ENCODE measurements at regions of chr2 and their contacts with region 1.

Region 1: DNA sequence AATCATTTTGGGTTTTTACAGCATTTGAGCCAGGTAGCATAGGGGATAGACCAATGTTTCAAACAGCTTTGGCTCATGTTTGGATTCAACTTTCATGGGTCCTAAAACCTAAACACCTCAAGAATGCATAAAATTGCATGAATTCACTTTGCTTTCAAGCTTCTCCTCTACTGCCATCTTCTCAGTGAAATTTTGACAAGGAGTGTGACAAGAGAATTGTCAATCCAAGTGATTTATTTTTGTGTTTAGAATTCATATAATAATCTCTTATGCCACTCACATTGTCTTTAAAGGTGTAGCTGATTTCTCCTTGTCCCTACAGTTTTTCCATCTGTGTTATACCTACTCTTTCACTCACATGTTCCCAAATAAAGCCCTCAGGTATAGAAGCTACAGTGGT is 264.8 kb upstream of the RND3 start:
- DNase-seq: no peak
- ATAC-seq: no peak
- H3K4me3 Mint-ChIP-seq: no peak overlapping the region
- H3K27ac Mint-ChIP-seq: no peak overlapping the region
- H3K4me1 Mint-ChIP-seq: no peaks in the 10 kb centered on the region
- H3K27me3 Mint-ChIP-seq: no peaks in the 10 kb centered on the region

Region 2: GRCh38 chr2:150742094-150742493 is 10.1 kb before region 1 on chr2:
- CTCF ChIA-PET with region 1: no interaction called
- POLR2A ChIA-PET with region 1: no interaction called
- intact Hi-C with region 1: loop called in 1 of 2 experiments (anchors 1 kb)
- DNase-seq: no peak
- ATAC-seq: no peak
- H3K4me3 Mint-ChIP-seq: no peak overlapping the region
- H3K27ac Mint-ChIP-seq: no peak overlapping the region
- H3K4me1 Mint-ChIP-seq: no peaks in the 10 kb centered on the region
- H3K27me3 Mint-ChIP-seq: no peaks in the 10 kb centered on the region

Region 3: DNA sequence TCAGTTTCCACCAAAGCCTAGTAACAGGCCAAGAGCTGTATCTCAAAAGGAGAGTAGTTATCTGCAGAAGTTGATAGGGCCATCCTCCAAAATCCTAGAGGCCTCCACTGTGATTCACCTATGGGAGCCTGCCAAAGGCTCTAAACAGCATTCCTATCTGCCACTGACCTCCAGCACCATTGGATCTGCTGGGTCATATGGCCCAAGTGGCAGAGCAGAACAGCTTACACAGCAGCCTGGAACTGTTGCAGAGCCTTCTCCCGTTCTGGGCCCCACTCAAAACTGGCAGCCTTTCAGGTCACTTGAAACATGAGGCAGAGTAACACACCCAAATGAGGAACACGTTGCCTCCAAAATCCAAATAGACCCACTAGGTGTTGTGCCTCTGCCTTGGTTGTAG is 80.5 kb after region 1 on chr2:
- CTCF ChIA-PET with region 1: no interaction called
- POLR2A ChIA-PET with region 1: no interaction called
- intact Hi-C with region 1: no loop called
- DNase-seq: no peak
- ATAC-seq: no peak
- H3K4me3 Mint-ChIP-seq: no peak overlapping the region
- H3K27ac Mint-ChIP-seq: no peak overlapping the region
- H3K4me1 Mint-ChIP-seq: no peaks in the 10 kb centered on the region
- H3K27me3 Mint-ChIP-seq: no peaks in the 10 kb centered on the region

Measured in activated CD4-positive, alpha-beta T cell treated with anti-CD3 and anti-CD28 coated beads for 36 hours (primary cell).